RWPE1 (cell line): ENCODE measurements at regions of chr20 and their contacts with region 1.

Region 1: GRCh38 chr20:59933849-59934596 is 586 bp upstream of the SYCP2 start:
- DNase-seq: peak; percentile 92
- H3K27ac ChIP-seq: peak overlapping the region; percentile 64
- CTCF ChIP-seq: peak; percentile 100

Region 2: DNA sequence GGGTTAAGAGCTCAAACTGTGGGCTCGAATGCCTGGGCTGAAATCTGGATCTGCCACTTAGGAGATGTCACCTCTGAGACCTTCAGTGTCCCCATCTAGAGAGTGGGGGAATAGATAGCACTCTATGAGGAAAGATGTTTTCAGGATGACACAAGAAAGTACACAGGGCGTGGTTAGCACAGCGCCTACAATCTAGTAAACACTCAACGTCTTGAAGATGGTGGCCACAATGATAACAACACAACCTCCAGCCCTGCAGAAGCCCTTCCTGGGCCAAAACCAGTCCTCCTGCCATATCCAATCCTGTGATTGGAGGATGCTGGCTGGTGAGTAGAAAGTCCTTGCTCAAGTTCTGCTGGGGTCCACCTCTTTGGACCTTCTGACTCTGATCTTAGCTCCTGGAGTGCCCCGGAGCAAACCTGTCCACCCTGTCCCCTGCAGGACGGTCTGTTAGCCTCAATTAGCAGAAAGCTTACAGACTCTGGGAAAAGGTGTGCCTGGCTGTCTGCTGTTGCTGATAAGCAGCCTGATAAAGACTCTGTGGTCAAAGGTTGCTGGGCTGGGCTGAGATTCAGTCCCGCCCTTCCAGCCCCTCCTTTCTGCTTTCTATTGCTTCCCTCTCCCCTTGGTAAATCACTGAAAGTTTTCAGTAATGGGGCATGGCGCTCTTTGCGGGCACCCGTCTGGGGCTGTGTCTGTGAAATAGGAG is 625.4 kb before region 1 on chr20:
- CTCF ChIA-PET with region 1: no interaction called
- POLR2A ChIA-PET with region 1: no interaction called
- DNase-seq: no peak
- H3K27ac ChIP-seq: no peak overlapping the region
- CTCF ChIP-seq: no peak

Region 3: DNA sequence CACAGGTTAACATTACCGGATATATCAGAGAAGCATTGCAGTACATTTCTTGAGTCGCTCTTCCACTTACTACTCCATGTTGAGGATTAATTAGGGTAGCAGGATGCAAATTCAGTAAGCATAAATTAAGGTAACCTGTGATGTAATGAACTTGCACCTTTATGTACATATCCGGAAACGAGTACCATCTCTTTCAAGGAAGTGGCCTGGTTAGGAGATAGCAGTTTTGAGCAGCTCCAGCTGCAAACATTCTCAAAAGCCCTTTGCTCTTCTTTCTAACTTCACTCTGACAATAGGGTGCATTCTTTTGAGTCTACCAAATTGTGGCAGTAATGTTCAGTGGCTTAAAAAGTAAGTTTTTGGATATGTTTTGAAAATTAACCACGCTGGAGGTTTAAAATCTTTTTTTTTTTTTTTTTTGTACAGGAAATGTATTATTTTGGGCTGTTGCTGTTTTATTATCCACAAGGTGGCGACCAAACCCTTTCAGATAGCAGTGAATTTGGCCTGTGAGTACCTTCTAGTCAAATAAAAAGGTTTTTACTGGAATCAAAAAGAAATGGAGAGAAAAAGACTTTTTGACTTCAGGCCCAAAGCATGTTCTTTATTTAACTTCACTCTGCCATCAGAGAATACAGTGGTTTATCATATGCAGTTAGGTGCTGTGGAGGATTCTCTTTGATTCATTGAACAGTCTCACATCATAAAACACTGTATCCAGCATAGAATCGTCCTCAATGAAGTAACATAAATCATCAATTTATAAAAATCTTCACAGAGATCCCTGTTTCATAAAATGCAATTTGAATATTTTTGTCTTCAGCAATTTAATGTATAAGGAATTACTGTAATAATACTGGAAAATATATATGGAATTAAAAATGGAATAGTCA is 15.1 kb after region 1 on chr20:
- CTCF ChIA-PET with region 1: interaction called, 16 read pairs
- POLR2A ChIA-PET with region 1: no interaction called
- DNase-seq: peak; percentile 48
- H3K27ac ChIP-seq: no peak overlapping the region
- CTCF ChIP-seq: peak; percentile 94